T-cell (primary cell): ENCODE measurements at regions of chr2 and their contacts with region 1.

Region 1: GRCh38 chr2:230762317-230762896 is 49.8 kb downstream of the CAB39 start:
- DNase-seq: peak in 30 of 35 experiments; percentile 6 to 53 (median 18)
- ATAC-seq: peak; percentile 75 to 90 (median 86)
- H3K4me3 ChIP-seq: no peak overlapping the region
- H3K4me3 Mint-ChIP-seq: no peak overlapping the region
- H3K27ac ChIP-seq: no peak overlapping the region
- H3K27ac Mint-ChIP-seq: no peak overlapping the region
- H3K4me1 ChIP-seq: peaks cover 10 to 12% of the 10 kb centered on the region in 2 experiments
- H3K4me1 Mint-ChIP-seq: peaks cover 59 to 70% (median 62%) of the 10 kb centered on the region in 3 donors
- H3K27me3 ChIP-seq: no peaks in the 10 kb centered on the region
- H3K27me3 Mint-ChIP-seq: no peaks in the 10 kb centered on the region

Region 2: DNA sequence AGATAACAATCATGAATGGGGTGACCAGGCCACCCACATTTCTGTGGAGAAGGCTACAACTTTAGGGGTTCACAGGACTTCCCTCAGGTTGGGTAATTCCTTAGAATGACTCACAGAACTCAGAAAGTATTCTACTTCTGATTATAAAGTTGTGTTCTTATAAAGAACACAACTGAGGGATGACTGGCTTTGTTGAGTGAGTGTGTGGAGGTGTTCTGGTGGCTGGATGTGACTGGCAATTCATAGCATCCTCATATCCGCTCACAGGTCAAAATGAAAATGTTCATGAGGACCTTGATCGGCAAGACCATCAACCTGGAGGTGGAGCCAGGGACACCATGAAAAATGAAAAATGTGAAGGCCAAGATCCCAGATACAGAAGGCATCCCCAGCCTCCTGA is 193.1 kb before region 1 on chr2:
- CTCF ChIA-PET with region 1: no interaction called
- POLR2A ChIA-PET with region 1: no interaction called
- DNase-seq: no peak
- ATAC-seq: no peak
- H3K4me3 ChIP-seq: no peak overlapping the region
- H3K4me3 Mint-ChIP-seq: no peak overlapping the region
- H3K27ac ChIP-seq: no peak overlapping the region
- H3K27ac Mint-ChIP-seq: no peak overlapping the region
- H3K4me1 ChIP-seq: no peaks in the 10 kb centered on the region
- H3K4me1 Mint-ChIP-seq: peaks cover 0 to 16% (median 13%) of the 10 kb centered on the region in 3 donors
- H3K27me3 ChIP-seq: no peaks in the 10 kb centered on the region
- H3K27me3 Mint-ChIP-seq: no peaks in the 10 kb centered on the region

Region 3: GRCh38 chr2:230666885-230667712 is 95.3 kb before region 1 on chr2:
- CTCF ChIA-PET with region 1: no interaction called
- POLR2A ChIA-PET with region 1: interaction called in 1 of 2 experiments, 10 read pairs
- DNase-seq: no peak
- ATAC-seq: no peak
- H3K4me3 ChIP-seq: no peak overlapping the region
- H3K4me3 Mint-ChIP-seq: peak overlapping the region in 1 of 3 donors; percentile 39
- H3K27ac ChIP-seq: no peak overlapping the region
- H3K27ac Mint-ChIP-seq: peak overlapping the region in 1 of 2 donors; percentile 63
- H3K4me1 ChIP-seq: peaks cover 27 to 75% of the 10 kb centered on the region in 2 experiments
- H3K4me1 Mint-ChIP-seq: peaks cover 75 to 86% (median 80%) of the 10 kb centered on the region in 3 donors
- H3K27me3 ChIP-seq: no peaks in the 10 kb centered on the region
- H3K27me3 Mint-ChIP-seq: no peaks in the 10 kb centered on the region